ENCODE measurements at regions of chr12 and their contacts with region 1.

Region 1: DNA sequence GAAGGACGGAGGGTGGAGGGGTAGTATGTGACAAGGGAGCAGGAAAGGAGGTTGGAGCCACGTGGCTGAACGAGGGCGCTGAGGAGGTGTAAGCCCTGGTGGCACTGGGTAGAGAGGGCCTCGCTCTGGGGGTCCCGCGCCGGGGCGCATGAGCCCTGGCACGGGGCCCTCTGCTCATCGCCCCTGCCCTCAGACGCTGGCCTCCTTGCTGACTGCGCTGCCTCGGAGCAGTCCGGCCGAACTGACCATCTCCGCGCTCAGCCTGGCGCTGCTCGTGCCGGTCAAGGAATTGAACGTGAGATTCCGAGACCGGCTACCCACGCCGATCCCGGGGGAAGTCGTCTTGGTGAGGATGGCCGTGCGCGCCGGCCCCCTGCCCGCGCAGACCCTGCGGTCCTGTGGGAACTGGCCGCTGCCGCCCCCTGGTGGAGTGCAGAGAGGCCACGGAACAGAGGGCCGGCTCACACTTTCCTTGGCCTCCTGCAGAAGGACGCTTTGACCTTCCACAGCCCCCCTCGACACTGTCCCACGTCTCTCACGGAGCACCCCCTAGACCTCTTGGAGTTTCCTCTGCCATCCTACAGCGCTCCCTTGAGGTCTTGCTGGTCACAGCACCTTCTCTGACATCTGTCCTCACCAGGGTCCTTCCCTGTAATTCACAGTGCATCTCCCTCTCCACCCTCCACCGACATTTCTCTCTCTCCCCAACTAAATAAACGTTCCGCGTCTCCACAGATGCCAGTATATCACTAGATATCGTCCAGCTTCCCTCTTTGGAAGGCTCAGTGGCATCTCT is 10.5 kb downstream of the ARHGEF25 start:
- DNase-seq: peak; percentile 50 to 73 (median 68)
- ATAC-seq: peak; percentile 77
- H3K4me3 ChIP-seq: no peak overlapping the region
- H3K27ac ChIP-seq: no peak overlapping the region
- H3K4me1 ChIP-seq: peaks cover 21% of the 10 kb centered on the region
- H3K27me3 ChIP-seq: peaks cover 0 to 23% of the 10 kb centered on the region in 2 donors
- CTCF ChIP-seq: peak; percentile 80 to 90 (median 87)
- POLR2A ChIP-seq: no peak

Region 2: GRCh38 chr12:57579677-57580465 is 41.8 kb before region 1 on chr12:
- intact Hi-C with region 1: loop called (anchors 2 kb)
- DNase-seq: no peak
- ATAC-seq: no peak
- H3K4me3 ChIP-seq: no peak overlapping the region
- H3K27ac ChIP-seq: no peak overlapping the region
- H3K4me1 ChIP-seq: no peaks in the 10 kb centered on the region
- H3K27me3 ChIP-seq: no peaks in the 10 kb centered on the region
- CTCF ChIP-seq: no peak
- POLR2A ChIP-seq: no peak